CD8-positive, alpha-beta memory T cell (primary cell): ENCODE measurements at regions of chr22 and their contacts with region 1.

Region 1: GRCh38 chr22:42090596-42091454 is at the start of gene NDUFA6:
- DNase-seq: peak; percentile 96 to 99 (median 98)
- H3K4me3 ChIP-seq: peak within 1 kb of the TSS; percentile 92
- H3K4me3 Mint-ChIP-seq: peak within 1 kb of the TSS; percentile 98 to 99 (median 99)
- H3K27ac ChIP-seq: peak within 1 kb of the TSS; percentile 94
- H3K27ac Mint-ChIP-seq: peak within 1 kb of the TSS; percentile 96 to 99 (median 98)
- H3K4me1 ChIP-seq: peaks cover 24% of the 10 kb centered on the region
- H3K4me1 Mint-ChIP-seq: peaks cover 33 to 51% (median 49%) of the 10 kb centered on the region in 3 donors
- H3K27me3 ChIP-seq: no peaks in the 10 kb centered on the region
- H3K27me3 Mint-ChIP-seq: no peaks in the 10 kb centered on the region
- total RNA-seq, gene NDUFA6: 106 to 126 TPM

Region 2: DNA sequence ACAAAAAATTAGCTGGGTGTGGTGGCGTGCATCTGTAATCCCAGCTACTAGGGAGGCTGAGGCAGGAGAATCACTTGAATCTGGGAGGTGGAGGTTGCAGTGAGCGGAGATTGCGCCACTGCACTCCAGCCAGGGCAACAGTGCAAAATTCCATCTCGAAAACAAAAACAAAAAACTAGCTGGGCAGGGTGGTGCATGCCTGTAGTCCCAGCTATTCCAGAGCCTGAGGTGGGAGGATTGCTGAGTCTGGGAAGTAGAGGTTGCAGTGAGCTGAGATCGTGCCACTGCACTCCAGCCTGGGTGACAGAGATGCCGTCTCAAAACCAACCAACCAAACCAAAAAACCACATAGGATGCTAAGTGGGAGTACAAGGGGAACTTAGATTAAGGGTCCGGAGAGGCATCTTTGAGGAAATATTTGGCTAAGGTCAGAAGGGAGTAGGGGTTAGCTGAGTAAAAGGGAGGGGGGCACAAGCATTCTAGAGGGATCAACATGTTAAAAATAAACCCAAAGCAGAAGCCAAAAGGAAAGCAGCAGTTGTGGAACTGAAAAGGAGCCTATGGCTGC is 632.6 kb before region 1 on chr22:
- CTCF ChIA-PET with region 1: no interaction called
- POLR2A ChIA-PET with region 1: no interaction called
- DNase-seq: no peak
- H3K4me3 ChIP-seq: no peak overlapping the region
- H3K4me3 Mint-ChIP-seq: no peak overlapping the region
- H3K27ac ChIP-seq: no peak overlapping the region
- H3K27ac Mint-ChIP-seq: peak overlapping the region in 5 of 8 donors; percentile 11 to 86 (median 70)
- H3K4me1 ChIP-seq: no peaks in the 10 kb centered on the region
- H3K4me1 Mint-ChIP-seq: peaks cover 0 to 5% (median 0%) of the 10 kb centered on the region in 3 donors
- H3K27me3 ChIP-seq: no peaks in the 10 kb centered on the region
- H3K27me3 Mint-ChIP-seq: no peaks in the 10 kb centered on the region

Region 3: GRCh38 chr22:42056757-42057511 is 33.9 kb before region 1 on chr22:
- CTCF ChIA-PET with region 1: no interaction called
- POLR2A ChIA-PET with region 1: no interaction called
- DNase-seq: no peak
- H3K4me3 ChIP-seq: no peak overlapping the region
- H3K4me3 Mint-ChIP-seq: no peak overlapping the region
- H3K27ac ChIP-seq: no peak overlapping the region
- H3K27ac Mint-ChIP-seq: no peak overlapping the region
- H3K4me1 ChIP-seq: no peaks in the 10 kb centered on the region
- H3K4me1 Mint-ChIP-seq: no peaks in the 10 kb centered on the region
- H3K27me3 ChIP-seq: no peaks in the 10 kb centered on the region
- H3K27me3 Mint-ChIP-seq: no peaks in the 10 kb centered on the region

Region 4: DNA sequence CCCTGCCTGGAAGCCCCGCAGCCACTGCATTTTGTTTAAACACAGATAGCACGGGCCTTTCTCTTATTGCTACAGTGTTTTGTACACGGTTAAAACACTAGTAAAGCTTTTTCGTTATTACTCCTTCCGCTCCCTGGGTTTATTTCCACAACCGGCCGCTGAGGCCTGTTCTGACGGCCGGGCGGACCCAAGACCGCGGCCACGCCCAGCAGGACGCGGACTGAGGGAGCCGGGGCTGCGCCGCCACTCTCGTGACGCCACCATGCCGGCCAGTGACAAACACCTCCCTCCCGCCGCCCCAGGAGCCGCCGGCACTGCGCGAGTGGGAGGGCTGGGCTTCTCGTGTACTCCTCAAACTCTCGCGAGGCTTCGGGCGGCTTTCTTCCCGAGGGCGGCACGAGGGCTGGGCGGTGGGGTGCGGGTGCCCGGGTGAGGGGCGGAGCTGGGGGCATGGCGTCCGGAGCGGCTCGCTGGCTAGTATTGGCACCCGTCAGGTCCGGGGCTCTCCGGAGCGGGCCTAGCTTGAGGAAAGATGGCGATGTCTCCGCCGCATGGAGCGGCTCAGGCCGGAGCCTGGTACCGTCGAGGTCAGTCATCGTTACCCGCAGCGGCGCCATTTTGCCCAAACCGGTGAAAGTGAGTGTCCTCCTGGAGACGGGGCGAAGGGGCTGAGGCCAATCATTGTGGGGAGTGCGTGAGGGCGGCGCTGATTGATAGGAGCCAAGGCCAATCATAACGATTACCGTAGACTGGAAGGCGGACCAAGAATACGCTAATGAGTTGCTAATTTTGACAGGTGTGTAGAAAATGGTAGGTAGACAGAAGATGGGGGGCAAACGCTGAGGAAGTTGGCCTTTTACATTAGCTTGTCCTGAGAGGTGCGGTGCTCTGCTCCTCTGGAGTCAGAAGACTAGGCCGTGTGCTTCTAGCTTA is 11.2 kb before region 1 on chr22 and contains the start of gene SMDT1:
- CTCF ChIA-PET with region 1: interaction called, 41 read pairs
- POLR2A ChIA-PET with region 1: interaction called, 68 read pairs
- DNase-seq: peak; percentile 98 to 99 (median 99)
- H3K4me3 ChIP-seq: peak within 1 kb of the TSS; percentile 81
- H3K4me3 Mint-ChIP-seq: peak within 1 kb of the TSS; percentile 93 to 98 (median 96)
- H3K27ac ChIP-seq: peak within 1 kb of the TSS; percentile 92
- H3K27ac Mint-ChIP-seq: peak within 1 kb of the TSS; percentile 97 to 100 (median 98)
- H3K4me1 ChIP-seq: peaks cover 24% of the 10 kb centered on the region
- H3K4me1 Mint-ChIP-seq: peaks cover 30 to 57% (median 37%) of the 10 kb centered on the region in 3 donors
- H3K27me3 ChIP-seq: no peaks in the 10 kb centered on the region
- H3K27me3 Mint-ChIP-seq: no peaks in the 10 kb centered on the region
- total RNA-seq, gene SMDT1: 67.9 to 74.5 TPM

Region 5: GRCh38 chr22:42116848-42117424 is 26.1 kb after region 1 on chr22:
- CTCF ChIA-PET with region 1: interaction called, 10 read pairs
- POLR2A ChIA-PET with region 1: interaction called, 5 read pairs
- DNase-seq: no peak
- H3K4me3 ChIP-seq: no peak overlapping the region
- H3K4me3 Mint-ChIP-seq: no peak overlapping the region
- H3K27ac ChIP-seq: no peak overlapping the region
- H3K27ac Mint-ChIP-seq: peak overlapping the region in 1 of 8 donors; percentile 17
- H3K4me1 ChIP-seq: peaks cover 22% of the 10 kb centered on the region
- H3K4me1 Mint-ChIP-seq: peaks cover 25 to 39% (median 35%) of the 10 kb centered on the region in 3 donors
- H3K27me3 ChIP-seq: no peaks in the 10 kb centered on the region
- H3K27me3 Mint-ChIP-seq: no peaks in the 10 kb centered on the region

Region 6: DNA sequence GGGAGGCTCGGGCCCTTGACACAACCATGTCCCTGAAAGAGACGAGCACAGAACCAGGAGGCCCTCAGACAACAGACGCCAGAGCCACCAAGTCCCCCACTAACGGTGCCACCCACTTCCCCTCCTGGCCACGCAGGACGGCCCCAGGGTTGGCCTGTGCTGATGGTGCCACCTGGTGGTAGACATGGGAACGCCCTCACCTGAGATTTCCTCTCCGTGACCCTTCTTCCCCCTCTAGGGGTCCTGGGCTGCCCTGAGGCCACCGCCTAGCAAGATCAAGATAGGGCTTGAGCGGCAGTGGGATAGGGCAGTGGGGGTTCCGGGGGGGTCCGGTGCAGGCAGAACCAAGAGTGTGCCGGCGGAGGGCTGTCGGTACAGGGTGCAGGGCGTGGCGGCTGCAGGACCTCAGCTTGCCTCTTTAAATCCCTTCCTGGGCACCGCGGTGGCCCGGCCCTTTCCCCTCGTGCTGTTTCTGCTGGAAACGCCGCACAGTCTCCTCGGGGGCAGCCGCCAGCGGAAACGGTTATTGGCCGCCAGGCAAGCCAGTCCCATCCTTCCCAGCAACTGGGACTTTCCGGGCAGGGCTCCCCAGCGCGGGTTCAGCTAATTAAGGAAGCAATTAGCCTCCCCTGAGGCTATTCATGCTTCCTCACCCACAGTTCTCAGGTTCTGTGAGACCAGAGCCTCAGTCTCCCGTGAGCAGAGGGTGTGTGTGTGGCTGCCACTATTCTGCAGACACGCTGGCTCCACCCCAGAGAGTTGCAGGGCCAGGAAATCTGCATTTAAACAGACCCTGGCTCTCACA is 346.9 kb after region 1 on chr22:
- CTCF ChIA-PET with region 1: interaction called, 29 read pairs
- POLR2A ChIA-PET with region 1: interaction called, 3 read pairs
- DNase-seq: peak; percentile 76 to 90 (median 81)
- H3K4me3 ChIP-seq: peak overlapping the region; percentile 73
- H3K4me3 Mint-ChIP-seq: peak overlapping the region; percentile 69 to 93 (median 82)
- H3K27ac ChIP-seq: peak overlapping the region; percentile 38
- H3K27ac Mint-ChIP-seq: peak overlapping the region in 5 of 8 donors; percentile 54 to 73 (median 63)
- H3K4me1 ChIP-seq: peaks cover 9% of the 10 kb centered on the region
- H3K4me1 Mint-ChIP-seq: peaks cover 4 to 12% (median 8%) of the 10 kb centered on the region in 3 donors
- H3K27me3 ChIP-seq: no peaks in the 10 kb centered on the region
- H3K27me3 Mint-ChIP-seq: peaks cover 2 to 6% of the 10 kb centered on the region in 2 donors